ENCODE measurements at regions of chr11 and their contacts with region 1.

Region 1: GRCh38 chr11:73661035-73661628 is 14.8 kb downstream of the PLEKHB1 start:
- DNase-seq: peak; percentile 90
- H3K4me3 ChIP-seq: peak overlapping the region; percentile 58
- H3K27ac ChIP-seq: no peak overlapping the region
- H3K4me1 ChIP-seq: peaks cover 32% of the 10 kb centered on the region
- H3K27me3 ChIP-seq: no peaks in the 10 kb centered on the region
- CTCF ChIP-seq: peak; percentile 98

Region 2: GRCh38 chr11:73350908-73351636 is 310.1 kb before region 1 on chr11:
- intact Hi-C with region 1: loop called (anchors 5 kb)
- DNase-seq: peak; percentile 46
- H3K4me3 ChIP-seq: no peak overlapping the region
- H3K27ac ChIP-seq: no peak overlapping the region
- H3K4me1 ChIP-seq: peaks cover 25% of the 10 kb centered on the region
- H3K27me3 ChIP-seq: no peaks in the 10 kb centered on the region
- CTCF ChIP-seq: peak; percentile 99

Region 3: DNA sequence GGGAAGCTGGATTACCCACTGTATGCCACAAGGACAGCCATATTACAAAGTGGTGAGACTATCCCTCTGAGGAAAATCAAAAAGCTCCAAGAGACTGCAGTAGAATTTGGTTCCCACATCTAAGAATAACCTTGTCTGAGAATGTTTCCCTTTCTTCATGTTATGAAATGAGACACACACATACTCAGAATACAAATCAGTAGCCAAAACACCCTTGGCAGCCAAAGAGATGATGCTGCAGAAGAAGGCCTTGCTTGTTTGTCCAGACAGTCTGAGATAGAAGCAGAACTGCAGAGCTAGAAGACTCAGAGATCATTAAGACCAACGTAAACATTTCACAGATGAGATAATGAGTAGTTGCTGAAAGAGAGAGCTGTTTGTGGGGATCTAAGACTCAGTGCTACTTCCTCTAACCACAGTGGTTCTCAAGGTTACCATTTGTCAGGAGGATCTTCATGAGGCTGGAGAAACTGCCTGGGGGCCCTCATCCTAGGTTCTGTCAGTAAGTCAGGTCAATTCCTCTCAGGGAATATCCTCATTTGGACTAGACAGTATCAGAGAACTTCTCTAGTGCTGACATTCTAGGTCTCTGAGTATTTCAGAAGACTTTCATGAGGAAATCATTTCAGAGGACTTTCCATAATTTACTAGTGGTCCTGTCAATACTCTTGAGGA is 246.0 kb before region 1 on chr11:
- intact Hi-C with region 1: loop called (anchors 5 kb)
- DNase-seq: no peak
- H3K4me3 ChIP-seq: no peak overlapping the region
- H3K27ac ChIP-seq: peak overlapping the region; percentile 60
- H3K4me1 ChIP-seq: peaks cover 33% of the 10 kb centered on the region
- H3K27me3 ChIP-seq: no peaks in the 10 kb centered on the region
- CTCF ChIP-seq: no peak

Region 4: DNA sequence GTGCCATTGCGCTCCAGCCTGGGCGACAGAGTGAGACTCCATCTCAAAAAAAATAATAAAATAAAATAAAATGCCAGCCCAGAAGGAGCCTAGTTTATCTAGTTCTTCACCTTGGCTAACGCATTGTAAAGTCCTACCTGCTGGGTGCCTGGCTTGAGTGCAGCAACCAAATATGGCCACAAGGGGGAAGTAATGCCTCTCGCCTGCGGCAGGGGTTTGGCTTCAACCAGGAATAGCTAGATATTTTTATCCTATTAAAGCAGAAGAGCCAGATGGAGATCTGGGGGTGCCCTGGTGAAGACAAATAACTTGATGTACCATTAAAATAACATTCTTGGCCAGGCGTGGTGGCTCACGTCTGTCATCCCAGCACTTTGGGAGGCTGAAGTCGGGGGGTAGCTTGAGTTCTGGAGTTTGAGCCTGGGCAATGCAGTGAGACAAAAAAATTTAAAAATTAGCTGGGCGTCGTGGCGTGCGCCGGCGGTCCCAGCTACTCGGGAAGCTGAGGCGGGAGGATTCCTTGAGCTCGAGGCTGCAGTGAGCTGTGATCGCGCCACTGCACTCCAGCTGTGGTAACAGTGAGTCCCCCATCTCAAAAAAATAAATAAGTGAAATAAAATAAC is 35.3 kb before region 1 on chr11:
- intact Hi-C with region 1: loop called (anchors 5 kb)
- DNase-seq: peak; percentile 61
- H3K4me3 ChIP-seq: peak overlapping the region; percentile 32
- H3K27ac ChIP-seq: no peak overlapping the region
- H3K4me1 ChIP-seq: peaks cover 19% of the 10 kb centered on the region
- H3K27me3 ChIP-seq: no peaks in the 10 kb centered on the region
- CTCF ChIP-seq: peak; percentile 96